ENCODE measurements at regions of chr1 and their contacts with region 1.

Region 1: GRCh38 chr1:55192093-55192492 is 23.1 kb downstream of the USP24 start:
- DNase-seq: no peak
- ATAC-seq: no peak
- H3K4me3 ChIP-seq: no peak overlapping the region
- H3K27ac ChIP-seq: no peak overlapping the region
- H3K4me1 ChIP-seq: 0 out of 2 replicates have a peak, but pooled peaks cover 11% of the 10 kb centered on the region
- H3K27me3 ChIP-seq: no peaks in the 10 kb centered on the region
- CTCF ChIP-seq: no peak
- EP300 ChIP-seq: no peak
- POLR2A ChIP-seq: no peak
- RAD21 ChIP-seq: no peak

Region 2: GRCh38 chr1:55206210-55206609 is 14.1 kb after region 1 on chr1:
- CTCF ChIA-PET with region 1: no interaction called
- POLR2A ChIA-PET with region 1: no interaction called
- in situ Hi-C with region 1: no loop called
- intact Hi-C with region 1: loop called (anchors 2 kb)
- DNase-seq: no peak
- ATAC-seq: no peak
- H3K4me3 ChIP-seq: no peak overlapping the region
- H3K27ac ChIP-seq: no peak overlapping the region
- H3K4me1 ChIP-seq: peaks cover 50% of the 10 kb centered on the region
- H3K27me3 ChIP-seq: no peaks in the 10 kb centered on the region
- CTCF ChIP-seq: no peak
- EP300 ChIP-seq: no peak
- POLR2A ChIP-seq: no peak
- RAD21 ChIP-seq: no peak